A673 (cell line): ENCODE measurements at regions of chr14 and their contacts with region 1.

Region 1: GRCh38 chr14:59362518-59362917 is 102.7 kb downstream of the GPR135 start:
- DNase-seq: no peak
- H3K4me3 ChIP-seq: no peak overlapping the region
- H3K27ac ChIP-seq: no peak overlapping the region
- H3K4me1 ChIP-seq: peaks cover 38% of the 10 kb centered on the region
- H3K27me3 ChIP-seq: no peaks in the 10 kb centered on the region
- CTCF ChIP-seq: no peak

Region 2: DNA sequence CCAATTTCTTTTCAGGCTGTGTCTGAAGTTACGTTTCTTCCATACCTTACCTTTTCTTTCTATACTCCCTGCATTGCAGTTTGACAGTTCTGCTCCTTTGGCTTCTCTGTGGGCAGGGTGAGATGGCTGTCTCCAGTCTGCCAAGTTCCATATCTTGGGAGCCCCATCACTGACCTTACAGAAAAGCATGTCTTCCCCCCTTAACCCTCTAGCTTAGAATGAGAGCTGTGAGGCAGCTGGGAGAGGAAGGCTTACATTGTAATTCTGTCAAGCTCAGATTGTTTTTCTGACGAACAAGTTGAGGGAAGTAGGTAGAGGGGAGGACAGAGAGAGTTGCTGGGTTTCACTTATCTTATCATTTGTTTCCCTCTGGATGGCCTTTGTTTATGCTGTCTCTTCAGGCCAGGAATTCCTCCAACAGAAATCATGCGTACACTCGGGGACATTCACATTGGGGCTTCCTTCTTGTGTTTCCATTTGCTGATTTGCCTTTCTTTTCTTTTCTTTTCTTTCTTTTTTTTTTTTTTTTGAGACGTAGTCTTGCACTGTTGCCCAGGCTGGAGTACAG is 164.7 kb before region 1 on chr14:
- CTCF ChIA-PET with region 1: no interaction called
- POLR2A ChIA-PET with region 1: interaction called, 10 read pairs
- intact Hi-C with region 1: no loop called
- DNase-seq: no peak
- H3K4me3 ChIP-seq: no peak overlapping the region
- H3K27ac ChIP-seq: no peak overlapping the region
- H3K4me1 ChIP-seq: no peaks in the 10 kb centered on the region
- H3K27me3 ChIP-seq: no peaks in the 10 kb centered on the region
- CTCF ChIP-seq: no peak

Region 3: GRCh38 chr14:59278113-59278512 is 84.4 kb before region 1 on chr14:
- CTCF ChIA-PET with region 1: no interaction called
- POLR2A ChIA-PET with region 1: no interaction called
- intact Hi-C with region 1: no loop called
- DNase-seq: no peak
- H3K4me3 ChIP-seq: no peak overlapping the region
- H3K27ac ChIP-seq: no peak overlapping the region
- H3K4me1 ChIP-seq: peaks cover 27% of the 10 kb centered on the region
- H3K27me3 ChIP-seq: no peaks in the 10 kb centered on the region
- CTCF ChIP-seq: no peak